ENCODE measurements at regions of chr6 and their contacts with region 1.

Region 1: DNA sequence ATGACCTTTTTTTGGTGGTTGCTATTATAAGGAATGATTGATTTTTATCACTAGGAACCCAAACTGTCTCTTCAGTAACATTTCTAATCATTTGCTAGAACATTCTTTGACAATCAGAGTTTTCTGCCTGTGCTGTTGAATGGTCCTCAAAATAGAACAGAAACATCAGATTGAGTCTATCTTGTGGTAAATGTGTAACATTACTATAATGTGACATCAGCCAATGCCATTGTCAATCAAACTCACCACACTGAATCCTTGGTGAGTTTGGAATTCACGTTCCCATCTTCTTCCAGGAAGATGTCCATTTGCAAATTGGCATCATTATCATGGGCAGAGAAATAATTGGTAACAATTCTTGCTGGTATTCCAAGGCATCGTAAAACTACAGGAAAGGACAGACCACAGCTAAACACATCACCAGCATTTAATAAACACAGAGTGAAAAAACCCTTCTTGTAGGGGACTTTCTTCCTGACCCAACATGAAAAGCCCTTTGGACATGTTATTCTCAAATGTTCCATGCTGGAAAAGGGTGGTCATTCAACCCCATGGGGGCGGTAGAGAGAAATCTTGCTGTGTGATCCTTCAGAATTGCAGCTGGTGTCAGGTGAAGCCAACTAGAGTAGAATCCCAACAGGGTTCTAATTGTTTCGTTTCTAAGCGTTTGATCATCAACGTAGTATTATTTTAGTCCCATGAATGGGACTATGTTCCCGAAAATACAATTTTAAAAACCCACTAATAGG is 98.5 kb downstream of the F13A1 start:
- DNase-seq: peak; percentile 61
- H3K4me3 ChIP-seq: no peak overlapping the region
- H3K27ac ChIP-seq: no peak overlapping the region
- H3K4me1 ChIP-seq: no peaks in the 10 kb centered on the region
- H3K27me3 ChIP-seq: peaks cover 8% of the 10 kb centered on the region
- CTCF ChIP-seq: peak; percentile 75

Region 2: GRCh38 chr6:6315660-6316059 is 93.7 kb after region 1 on chr6:
- CTCF ChIA-PET with region 1: no interaction called
- POLR2A ChIA-PET with region 1: no interaction called
- intact Hi-C with region 1: loop called (anchors 10 kb)
- DNase-seq: peak; percentile 77
- H3K4me3 ChIP-seq: no peak overlapping the region
- H3K27ac ChIP-seq: no peak overlapping the region
- H3K4me1 ChIP-seq: no peaks in the 10 kb centered on the region
- H3K27me3 ChIP-seq: peaks cover 46% of the 10 kb centered on the region
- CTCF ChIP-seq: peak; percentile 82

Region 3: GRCh38 chr6:6494677-6495076 is 272.7 kb after region 1 on chr6:
- CTCF ChIA-PET with region 1: interaction called, 3 read pairs
- POLR2A ChIA-PET with region 1: no interaction called
- intact Hi-C with region 1: loop called (anchors 5 kb)
- DNase-seq: peak; percentile 83
- H3K4me3 ChIP-seq: no peak overlapping the region
- H3K27ac ChIP-seq: no peak overlapping the region
- H3K4me1 ChIP-seq: no peaks in the 10 kb centered on the region
- H3K27me3 ChIP-seq: no peaks in the 10 kb centered on the region
- CTCF ChIP-seq: peak; percentile 89

Measured in A673 (cell line).